ENCODE measurements at regions of chr12 and their contacts with region 1.

Region 1: GRCh38 chr12:125049093-125049458 is 16.2 kb upstream of the AACS start:
- DNase-seq: no peak
- ATAC-seq: no peak
- H3K4me3 ChIP-seq: peak overlapping the region; percentile 56 to 83
- H3K4me3 Mint-ChIP-seq: peak overlapping the region; percentile 85 to 89 (median 87)
- H3K27ac ChIP-seq: no peak overlapping the region
- H3K27ac Mint-ChIP-seq: peak overlapping the region; percentile 51 to 90
- H3K4me1 ChIP-seq: peaks cover 2 to 13% of the 10 kb centered on the region in 2 experiments
- H3K4me1 Mint-ChIP-seq: peaks cover 7 to 9% (median 8%) of the 10 kb centered on the region in 3 donors
- H3K27me3 ChIP-seq: no peaks in the 10 kb centered on the region
- H3K27me3 Mint-ChIP-seq: no peaks in the 10 kb centered on the region

Region 2: GRCh38 chr12:125065021-125065795 is 16.1 kb after region 1 on chr12 and contains the start of gene AACS:
- CTCF ChIA-PET with region 1: interaction called in 1 of 2 experiments, 3 read pairs
- POLR2A ChIA-PET with region 1: interaction called, 3 to 13 read pairs
- DNase-seq: peak; percentile 36 to 85 (median 66)
- ATAC-seq: peak; percentile 94 to 98 (median 97)
- H3K4me3 ChIP-seq: peak within 1 kb of the TSS; percentile 58 to 79
- H3K4me3 Mint-ChIP-seq: peak within 1 kb of the TSS; percentile 80 to 86 (median 83)
- H3K27ac ChIP-seq: no peak within 1 kb of the TSS
- H3K27ac Mint-ChIP-seq: peak within 1 kb of the TSS; percentile 66 to 75
- H3K4me1 ChIP-seq: peaks cover 3 to 8% of the 10 kb centered on the region in 2 experiments
- H3K4me1 Mint-ChIP-seq: peaks cover 18 to 27% (median 21%) of the 10 kb centered on the region in 3 donors
- H3K27me3 ChIP-seq: peaks cover 0 to 2% of the 10 kb centered on the region in 2 experiments
- H3K27me3 Mint-ChIP-seq: peaks cover 0 to 10% of the 10 kb centered on the region in 2 donors
- total RNA-seq, gene AACS: 11.5 to 16.4 (median 14.3) TPM